AG04449 (cell line): ENCODE measurements at regions of chr1 and their contacts with region 1.

Region 1: GRCh38 chr1:20574686-20575540 is 14.0 kb upstream of the CDA start:
- DNase-seq: no peak
- H3K4me3 ChIP-seq: no peak overlapping the region
- CTCF ChIP-seq: peak; percentile 90

Region 2: GRCh38 chr1:20558191-20558590 is 16.7 kb before region 1 on chr1:
- CTCF ChIA-PET with region 1: interaction called, 32 read pairs
- POLR2A ChIA-PET with region 1: no interaction called
- DNase-seq: no peak
- H3K4me3 ChIP-seq: no peak overlapping the region
- CTCF ChIP-seq: no peak

Region 3: DNA sequence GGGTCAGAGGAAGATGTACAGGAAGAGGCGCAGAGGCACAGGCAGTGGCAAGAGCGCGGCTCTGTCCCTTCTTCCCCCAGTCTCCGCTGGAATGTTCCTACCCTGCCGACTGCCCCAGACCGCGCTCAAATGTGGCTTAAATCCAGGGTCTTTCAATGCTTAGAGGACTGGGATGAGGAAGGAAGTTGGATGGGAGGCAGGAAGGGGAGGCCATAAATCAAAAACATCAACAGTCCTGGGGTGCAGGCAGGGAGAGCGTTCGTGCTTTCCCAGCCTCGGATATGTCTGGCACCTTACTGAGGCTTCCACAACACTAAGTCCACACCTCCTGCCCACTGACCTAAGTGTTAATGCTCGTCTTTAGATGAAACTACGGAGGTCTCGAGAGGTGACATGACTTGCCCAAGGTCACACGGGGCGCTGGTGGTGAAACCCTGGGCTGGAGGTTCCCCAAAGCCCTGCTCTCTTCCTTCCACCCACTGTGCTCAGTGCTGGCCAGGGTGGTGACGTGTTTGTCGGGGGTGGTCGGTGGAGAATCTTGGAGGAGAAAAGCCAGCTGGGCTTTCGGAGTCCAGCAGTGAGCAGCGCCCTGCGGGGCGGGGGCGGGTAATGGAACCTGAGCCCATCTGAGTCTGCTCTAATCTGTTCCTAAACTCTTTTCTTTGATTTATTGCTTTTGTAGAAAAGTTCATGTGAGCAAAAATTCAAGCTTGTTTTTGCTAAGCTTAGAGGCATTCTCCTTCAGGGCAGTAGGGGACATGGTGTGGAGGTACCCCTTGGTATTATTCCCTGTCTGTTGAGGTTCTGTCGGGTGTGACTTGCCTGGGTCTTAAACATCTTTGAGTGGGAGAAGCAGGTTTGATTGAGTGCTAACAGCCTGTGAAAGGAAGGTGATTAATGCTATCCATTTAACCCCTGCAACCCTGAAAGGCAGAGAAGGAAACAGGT is 14.7 kb after region 1 on chr1:
- CTCF ChIA-PET with region 1: interaction called, 54 read pairs
- POLR2A ChIA-PET with region 1: no interaction called
- DNase-seq: no peak
- H3K4me3 ChIP-seq: peak overlapping the region; percentile 40
- CTCF ChIP-seq: no peak

Region 4: DNA sequence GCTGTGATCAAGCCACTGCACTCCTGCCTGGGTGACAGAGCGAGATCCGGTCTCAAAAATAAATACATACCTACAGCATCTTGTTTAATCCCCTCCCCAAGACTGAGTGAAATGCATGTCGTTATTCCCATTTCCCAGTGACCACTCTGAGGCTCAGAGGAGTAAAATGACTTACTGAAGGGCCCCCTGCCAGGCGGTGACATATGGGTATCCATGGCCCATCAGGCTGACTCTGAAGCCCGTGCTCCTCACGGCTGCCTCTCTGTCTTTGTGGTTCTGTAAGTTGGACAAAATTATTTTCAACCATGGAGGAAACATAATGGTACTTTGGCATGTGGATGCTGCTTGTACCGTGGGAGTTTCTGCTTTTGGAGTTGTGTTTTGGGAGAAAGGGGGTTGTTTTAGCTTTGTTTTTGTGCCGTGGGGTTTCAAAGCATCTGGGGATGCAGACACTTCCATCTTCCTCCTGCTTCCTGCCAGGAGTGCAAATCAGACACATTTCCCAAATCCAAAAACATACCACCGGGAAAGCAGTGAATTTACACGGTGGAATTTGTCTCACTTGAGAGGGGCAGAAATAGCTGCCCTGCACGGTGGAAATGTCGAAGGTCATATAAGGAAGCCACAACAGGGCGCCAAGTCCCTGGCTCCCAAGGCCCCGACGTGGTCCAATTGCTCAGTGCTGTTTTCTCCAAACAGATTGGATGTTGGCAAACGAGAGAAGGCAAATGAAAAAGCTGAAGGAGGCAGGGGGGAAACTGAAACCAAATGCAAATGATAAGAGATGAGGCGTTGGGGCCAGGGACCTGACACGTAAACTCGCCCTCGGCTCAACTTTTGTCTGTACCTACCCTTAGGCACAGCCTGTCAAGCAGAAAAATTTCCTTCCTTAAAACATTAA is 41.3 kb after region 1 on chr1:
- CTCF ChIA-PET with region 1: interaction called, 10 read pairs
- POLR2A ChIA-PET with region 1: no interaction called
- DNase-seq: no peak
- H3K4me3 ChIP-seq: no peak overlapping the region
- CTCF ChIP-seq: no peak

Region 5: GRCh38 chr1:20640183-20640597 is 65.3 kb after region 1 on chr1:
- CTCF ChIA-PET with region 1: interaction called, 186 read pairs
- POLR2A ChIA-PET with region 1: no interaction called
- DNase-seq: no peak
- H3K4me3 ChIP-seq: no peak overlapping the region
- CTCF ChIP-seq: peak; percentile 70